ENCODE measurements at regions of chr15 and their contacts with region 1.

Region 1: DNA sequence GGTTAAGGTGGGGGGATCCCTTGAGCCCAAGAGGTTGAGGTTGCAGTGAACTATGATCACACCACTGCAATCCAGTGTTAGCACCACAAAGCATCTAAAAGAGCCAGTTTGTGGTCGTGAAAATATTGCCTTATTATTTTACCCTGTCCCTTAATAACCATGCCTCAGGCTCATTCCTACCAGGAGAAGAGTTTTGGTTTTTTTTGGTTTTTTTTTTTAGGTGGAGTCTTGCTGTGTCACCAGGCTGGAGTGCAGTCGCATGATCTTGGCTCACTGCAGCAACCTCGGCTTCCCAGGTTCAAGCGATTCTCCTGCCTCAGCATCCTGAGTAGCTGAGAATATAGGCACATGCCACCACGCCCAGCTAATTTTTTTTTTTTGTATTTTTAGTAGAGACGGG is 17.9 kb upstream of the AVEN start:
- DNase-seq: no peak
- H3K4me3 ChIP-seq: no peak overlapping the region
- H3K27ac ChIP-seq: no peak overlapping the region
- H3K4me1 ChIP-seq: peaks cover 0 to 10% (median 2%) of the 10 kb centered on the region in 4 donors
- H3K27me3 ChIP-seq: no peaks in the 10 kb centered on the region
- CTCF ChIP-seq: no peak
- EP300 ChIP-seq: no peak
- POLR2A ChIP-seq: no peak

Region 2: DNA sequence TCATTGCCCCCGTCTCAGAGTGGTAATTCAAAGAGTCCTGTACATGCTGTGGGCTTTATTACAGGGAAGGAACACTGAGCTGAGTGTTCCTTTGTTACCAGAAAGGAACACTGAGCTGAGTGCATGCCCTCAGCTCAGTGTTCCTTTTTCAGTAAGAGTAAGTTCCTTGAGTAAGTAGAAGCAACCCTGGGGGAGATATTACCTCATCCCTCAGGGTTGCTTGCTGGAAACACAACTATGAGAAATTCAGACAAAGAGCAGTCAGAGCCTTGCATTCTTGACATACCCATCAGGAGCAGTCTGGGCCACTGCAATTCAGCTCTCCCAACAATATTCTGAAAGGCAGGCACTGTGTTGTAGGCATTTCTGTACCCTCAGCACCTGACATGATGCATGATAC is 71.6 kb before region 1 on chr15:
- intact Hi-C with region 1: no loop called
- DNase-seq: no peak
- H3K4me3 ChIP-seq: no peak overlapping the region
- H3K27ac ChIP-seq: no peak overlapping the region
- H3K4me1 ChIP-seq: peaks cover 0 to 10% (median 2%) of the 10 kb centered on the region in 4 donors
- H3K27me3 ChIP-seq: no peaks in the 10 kb centered on the region
- CTCF ChIP-seq: no peak
- EP300 ChIP-seq: no peak
- POLR2A ChIP-seq: no peak

Region 3: DNA sequence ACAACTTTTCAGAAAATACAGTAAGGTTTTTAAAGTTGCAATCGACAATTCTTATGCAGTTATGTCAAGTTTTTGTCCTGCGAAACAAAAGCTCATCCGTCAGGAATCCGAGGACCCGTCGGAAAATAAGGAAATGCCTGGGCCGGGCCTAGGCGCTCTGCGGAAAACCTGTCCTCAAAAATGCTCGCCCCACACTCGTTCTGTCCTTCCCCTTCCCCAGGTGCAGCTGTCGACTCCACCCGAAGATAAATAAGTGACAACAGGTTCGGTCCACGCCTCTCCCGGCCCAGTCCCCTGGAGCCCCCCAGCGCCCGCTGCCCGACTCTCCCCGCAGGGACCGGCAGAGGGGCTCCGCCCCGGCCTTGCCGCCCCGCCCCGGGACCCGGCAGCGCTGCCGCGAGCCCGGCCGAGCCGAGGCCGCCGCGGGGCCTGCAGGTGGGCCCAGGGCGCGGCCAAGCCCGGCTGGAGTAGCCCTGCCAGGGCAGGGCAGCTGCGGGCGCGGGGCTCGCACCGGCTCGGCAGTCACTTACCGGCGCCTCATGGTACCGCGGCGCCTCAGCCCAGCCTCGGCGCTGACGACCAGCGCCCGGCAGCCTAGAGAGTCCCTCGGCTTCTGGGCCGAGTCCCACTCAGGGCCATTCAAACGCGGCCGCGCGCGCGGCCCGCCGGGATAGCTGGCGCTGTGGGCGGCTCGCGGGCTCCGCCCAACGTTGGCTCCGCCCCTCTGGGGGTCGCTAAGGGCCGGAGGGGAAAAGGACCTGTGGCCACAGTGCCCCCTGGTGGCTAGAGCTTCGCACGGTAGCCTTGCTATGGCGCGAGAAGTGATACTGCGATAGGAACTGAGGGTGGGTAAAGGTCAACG is 152.7 kb after region 1 on chr15 and contains the start of gene KATNBL1:
- intact Hi-C with region 1: loop called (anchors 1 kb)
- DNase-seq: peak; percentile 97
- H3K4me3 ChIP-seq: peak within 1 kb of the TSS; percentile 58 to 75 (median 70)
- H3K27ac ChIP-seq: peak within 1 kb of the TSS; percentile 86 to 91 (median 88)
- H3K4me1 ChIP-seq: peaks cover 0 to 14% (median 10%) of the 10 kb centered on the region in 4 donors
- H3K27me3 ChIP-seq: no peaks in the 10 kb centered on the region
- CTCF ChIP-seq: peak; percentile 83 to 94 (median 90)
- EP300 ChIP-seq: no peak
- POLR2A ChIP-seq: peak; percentile 31 to 48
- total RNA-seq, gene KATNBL1: 39.5 to 88.9 (median 68.2) TPM